ENCODE measurements at regions of chr2 and their contacts with region 1.

Region 1: GRCh38 chr2:8906208-8906607 is 68.8 kb upstream of the KIDINS220 start:
- DNase-seq: no peak
- ATAC-seq: no peak
- H3K4me3 ChIP-seq: no peak overlapping the region
- H3K27ac ChIP-seq: no peak overlapping the region
- H3K4me1 ChIP-seq: no peaks in the 10 kb centered on the region
- H3K27me3 ChIP-seq: peaks cover 0 to 4% of the 10 kb centered on the region in 2 experiments; a peak in 2 of 5 replicates
- CTCF ChIP-seq: no peak
- EP300 ChIP-seq: no peak
- POLR2A ChIP-seq: no peak
- RAD21 ChIP-seq: no peak

Region 2: GRCh38 chr2:7427293-7428060 is 1478.7 kb before region 1 on chr2:
- CTCF ChIA-PET with region 1: no interaction called
- POLR2A ChIA-PET with region 1: no interaction called
- in situ Hi-C with region 1: no loop called
- intact Hi-C with region 1: loop called (anchors 5 kb)
- DNase-seq: peak; percentile 53
- ATAC-seq: peak; percentile 56
- H3K4me3 ChIP-seq: no peak overlapping the region
- H3K27ac ChIP-seq: no peak overlapping the region
- H3K4me1 ChIP-seq: no peaks in the 10 kb centered on the region
- H3K27me3 ChIP-seq: peaks cover 0 to 14% of the 10 kb centered on the region in 2 experiments; a peak in 2 of 5 replicates
- CTCF ChIP-seq: peak; percentile 85
- EP300 ChIP-seq: no peak
- POLR2A ChIP-seq: no peak
- RAD21 ChIP-seq: peak; percentile 51; the same call in 1 of the 2 replicates

Region 3: DNA sequence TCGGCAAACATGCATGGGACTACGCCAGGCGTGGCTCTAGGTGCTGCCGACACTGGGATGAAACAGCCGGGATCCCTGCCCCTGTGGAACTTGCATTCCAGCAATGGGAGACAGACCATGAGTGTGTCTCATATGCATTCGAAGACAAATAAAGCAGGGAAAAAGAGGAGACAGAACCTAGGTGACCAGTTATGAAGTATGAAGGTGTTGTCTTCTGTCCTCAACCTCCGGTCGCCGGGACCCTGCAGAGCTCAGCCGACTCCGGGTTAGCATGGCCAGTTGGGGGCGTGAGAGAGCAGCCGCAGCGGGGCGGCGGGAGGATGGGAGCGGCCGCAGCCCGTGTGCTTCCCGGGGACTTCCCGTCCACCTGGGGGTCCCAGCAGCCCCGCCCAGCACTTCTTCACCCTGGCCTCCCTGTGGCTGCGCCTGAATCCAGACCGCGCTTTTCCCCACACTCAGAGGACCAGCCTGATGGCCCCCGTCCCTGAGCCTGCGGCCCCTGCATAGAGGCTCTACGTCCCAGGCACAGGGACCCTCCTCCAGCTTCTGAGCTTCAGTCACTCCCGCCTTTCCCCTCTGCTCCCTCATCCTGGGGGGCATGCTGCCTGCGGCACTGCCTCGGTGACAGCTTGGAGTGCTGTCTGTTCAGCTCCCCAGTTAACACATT is 212.9 kb before region 1 on chr2:
- CTCF ChIA-PET with region 1: interaction called, 5 read pairs
- POLR2A ChIA-PET with region 1: no interaction called
- in situ Hi-C with region 1: no loop called
- intact Hi-C with region 1: loop called (anchors 10 kb)
- DNase-seq: peak; percentile 30
- ATAC-seq: peak; percentile 93
- H3K4me3 ChIP-seq: peak overlapping the region; percentile 16 to 61 (median 38); a peak in 4 of 6 replicates
- H3K27ac ChIP-seq: no peak overlapping the region
- H3K4me1 ChIP-seq: peaks cover 18% of the 10 kb centered on the region; the same call in 1 of the 2 replicates
- H3K27me3 ChIP-seq: peaks cover 0 to 28% of the 10 kb centered on the region in 2 experiments; a peak in 2 of 5 replicates
- CTCF ChIP-seq: peak; percentile 96
- EP300 ChIP-seq: no peak
- POLR2A ChIP-seq: no peak
- RAD21 ChIP-seq: peak; percentile 73

Region 4: DNA sequence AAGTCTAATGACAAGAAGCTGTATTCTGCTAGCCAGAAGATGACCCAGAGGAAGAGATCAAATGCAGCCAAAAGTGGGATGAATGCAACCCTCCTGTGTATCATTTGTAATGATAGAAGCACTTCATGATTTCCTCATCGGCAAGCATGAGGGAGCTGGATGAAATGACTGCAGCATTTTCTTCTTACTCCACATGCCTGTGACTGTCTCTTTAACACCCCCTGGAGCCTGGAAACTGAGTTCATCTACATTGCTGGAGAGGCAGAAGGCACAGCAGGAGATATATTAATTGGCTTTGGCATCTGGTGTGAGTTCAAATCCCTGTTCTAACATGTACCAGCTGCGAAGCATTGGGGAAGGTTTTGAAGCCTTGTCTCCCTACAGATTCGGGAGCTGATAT is 186.7 kb before region 1 on chr2:
- CTCF ChIA-PET with region 1: no interaction called
- POLR2A ChIA-PET with region 1: no interaction called
- in situ Hi-C with region 1: no loop called
- intact Hi-C with region 1: no loop called
- DNase-seq: no peak
- ATAC-seq: no peak
- H3K4me3 ChIP-seq: no peak overlapping the region
- H3K27ac ChIP-seq: no peak overlapping the region
- H3K4me1 ChIP-seq: peaks cover 10% of the 10 kb centered on the region; the same call in 1 of the 2 replicates
- H3K27me3 ChIP-seq: peaks cover 0 to 3% of the 10 kb centered on the region in 2 experiments; a peak in 1 of 5 replicates
- CTCF ChIP-seq: no peak
- EP300 ChIP-seq: no peak
- POLR2A ChIP-seq: no peak
- RAD21 ChIP-seq: no peak

Region 5: GRCh38 chr2:8790739-8791162 is 115.5 kb before region 1 on chr2:
- CTCF ChIA-PET with region 1: no interaction called
- POLR2A ChIA-PET with region 1: no interaction called
- in situ Hi-C with region 1: no loop called
- intact Hi-C with region 1: no loop called
- DNase-seq: no peak
- ATAC-seq: no peak
- H3K4me3 ChIP-seq: no peak overlapping the region
- H3K27ac ChIP-seq: no peak overlapping the region
- H3K4me1 ChIP-seq: no peaks in the 10 kb centered on the region
- H3K27me3 ChIP-seq: no peaks in the 10 kb centered on the region
- CTCF ChIP-seq: no peak
- EP300 ChIP-seq: no peak
- POLR2A ChIP-seq: no peak
- RAD21 ChIP-seq: no peak

Region 6: GRCh38 chr2:8803658-8804379 is 102.4 kb before region 1 on chr2:
- CTCF ChIA-PET with region 1: no interaction called
- POLR2A ChIA-PET with region 1: no interaction called
- in situ Hi-C with region 1: no loop called
- intact Hi-C with region 1: no loop called
- DNase-seq: peak; percentile 88
- ATAC-seq: peak; percentile 95
- H3K4me3 ChIP-seq: no peak overlapping the region
- H3K27ac ChIP-seq: no peak overlapping the region
- H3K4me1 ChIP-seq: peaks cover 5% of the 10 kb centered on the region; the same call in 1 of the 2 replicates
- H3K27me3 ChIP-seq: no peaks in the 10 kb centered on the region
- CTCF ChIP-seq: peak; percentile 20; the same call in 1 of the 2 replicates
- EP300 ChIP-seq: peak in 1 of 2 experiments; percentile 35; a peak in 1 of 4 replicates
- POLR2A ChIP-seq: no peak
- RAD21 ChIP-seq: no peak

Region 7: GRCh38 chr2:8872821-8873432 is 33.3 kb before region 1 on chr2:
- CTCF ChIA-PET with region 1: no interaction called
- POLR2A ChIA-PET with region 1: no interaction called
- in situ Hi-C with region 1: no loop called
- intact Hi-C with region 1: loop called (anchors 1 kb)
- DNase-seq: peak; percentile 61
- ATAC-seq: peak; percentile 56
- H3K4me3 ChIP-seq: no peak overlapping the region
- H3K27ac ChIP-seq: no peak overlapping the region
- H3K4me1 ChIP-seq: no peaks in the 10 kb centered on the region
- H3K27me3 ChIP-seq: peaks cover 1 to 4% of the 10 kb centered on the region in 2 experiments; a peak in 1 of 5 replicates
- CTCF ChIP-seq: peak; percentile 69
- EP300 ChIP-seq: no peak
- POLR2A ChIP-seq: no peak
- RAD21 ChIP-seq: no peak

Region 8: GRCh38 chr2:9234680-9235387 is 328.6 kb after region 1 on chr2:
- CTCF ChIA-PET with region 1: no interaction called
- POLR2A ChIA-PET with region 1: no interaction called
- in situ Hi-C with region 1: no loop called
- intact Hi-C with region 1: no loop called
- DNase-seq: peak; percentile 96
- ATAC-seq: peak; percentile 65
- H3K4me3 ChIP-seq: peak overlapping the region; percentile 40 to 66 (median 49); a peak in 5 of 6 replicates
- H3K27ac ChIP-seq: peak overlapping the region; percentile 84
- H3K4me1 ChIP-seq: peaks cover 88% of the 10 kb centered on the region
- H3K27me3 ChIP-seq: no peaks in the 10 kb centered on the region
- CTCF ChIP-seq: no peak
- EP300 ChIP-seq: peak in 1 of 2 experiments; percentile 82; a peak in 2 of 4 replicates
- POLR2A ChIP-seq: peak in 1 of 2 experiments; percentile 11; a peak in 1 of 4 replicates
- RAD21 ChIP-seq: no peak